ENCODE measurements at regions of chr7 and their contacts with region 1.

Region 1: DNA sequence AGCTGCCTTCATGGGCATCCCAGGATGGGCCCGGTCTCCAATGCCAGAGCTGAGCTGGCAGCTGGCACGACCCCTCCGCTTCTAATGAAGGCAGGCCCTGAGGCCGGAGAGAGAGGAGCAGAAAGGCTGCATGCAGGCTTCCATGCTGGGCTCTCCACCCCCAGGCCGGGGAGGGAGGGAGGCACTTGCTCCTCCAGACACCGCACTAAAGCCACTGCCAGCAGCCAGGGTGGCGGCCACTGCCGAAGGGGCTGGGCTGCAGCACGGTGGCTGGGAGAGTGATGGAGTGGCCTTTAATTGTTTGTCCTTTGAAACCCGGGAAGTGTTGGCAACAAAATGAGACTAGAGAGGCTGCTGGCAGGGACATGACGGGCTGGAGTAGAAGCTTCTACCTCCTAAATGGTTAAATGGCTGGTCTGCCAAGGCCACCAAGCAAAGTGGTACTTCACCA is 236.5 kb downstream of the SKAP2 start:
- DNase-seq: no peak
- H3K4me3 ChIP-seq: no peak overlapping the region
- H3K27ac ChIP-seq: no peak overlapping the region
- H3K4me1 ChIP-seq: no peaks in the 10 kb centered on the region
- H3K27me3 ChIP-seq: no peaks in the 10 kb centered on the region
- CTCF ChIP-seq: no peak
- POLR2A ChIP-seq: no peak

Region 2: DNA sequence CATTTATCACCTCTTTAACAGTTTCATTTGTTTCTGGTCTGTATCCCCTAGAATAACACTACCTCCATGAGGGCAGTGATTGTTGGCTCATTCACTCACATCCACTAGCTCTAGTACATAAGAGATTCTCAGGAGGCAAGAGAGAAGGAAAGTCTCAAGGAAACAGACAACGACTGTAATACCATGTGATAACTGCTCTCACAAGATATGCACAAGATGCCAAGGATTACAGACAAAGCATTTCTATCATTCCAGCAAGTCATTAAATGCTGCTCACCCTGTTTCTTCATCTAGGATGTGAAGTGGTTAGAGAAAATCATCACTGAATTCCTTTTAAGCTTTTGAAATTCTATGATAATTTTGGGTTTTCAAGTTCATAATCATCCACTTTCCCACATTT is 919.5 kb after region 1 on chr7:
- intact Hi-C with region 1: loop called (anchors 5 kb)
- DNase-seq: no peak
- H3K4me3 ChIP-seq: no peak overlapping the region
- H3K27ac ChIP-seq: no peak overlapping the region
- H3K4me1 ChIP-seq: no peaks in the 10 kb centered on the region
- H3K27me3 ChIP-seq: no peaks in the 10 kb centered on the region
- CTCF ChIP-seq: no peak
- POLR2A ChIP-seq: no peak